ENCODE measurements at regions of chr6 and their contacts with region 1.

Region 1: GRCh38 chr6:34248727-34249551 is at the start of gene SMIM29:
- DNase-seq: peak; percentile 83 to 97
- H3K4me3 ChIP-seq: peak within 1 kb of the TSS; percentile 88
- H3K27ac ChIP-seq: peak within 1 kb of the TSS; percentile 83
- H3K4me1 ChIP-seq: peaks cover 43% of the 10 kb centered on the region
- H3K27me3 ChIP-seq: no peaks in the 10 kb centered on the region
- CTCF ChIP-seq: peak; percentile 87
- total RNA-seq, gene SMIM29: 32.8 and 35.2 TPM in 2 replicates

Region 2: GRCh38 chr6:34161857-34162515 is 87.0 kb before region 1 on chr6:
- CTCF ChIA-PET with region 1: interaction called, 13 read pairs
- POLR2A ChIA-PET with region 1: no interaction called
- intact Hi-C with region 1: loop called (anchors 1 kb)
- DNase-seq: no peak
- H3K4me3 ChIP-seq: no peak overlapping the region
- H3K27ac ChIP-seq: no peak overlapping the region
- H3K4me1 ChIP-seq: no peaks in the 10 kb centered on the region; the same call in 1 of the 2 replicates
- H3K27me3 ChIP-seq: no peaks in the 10 kb centered on the region; the same call in 1 of the 2 replicates
- CTCF ChIP-seq: no peak

Region 3: DNA sequence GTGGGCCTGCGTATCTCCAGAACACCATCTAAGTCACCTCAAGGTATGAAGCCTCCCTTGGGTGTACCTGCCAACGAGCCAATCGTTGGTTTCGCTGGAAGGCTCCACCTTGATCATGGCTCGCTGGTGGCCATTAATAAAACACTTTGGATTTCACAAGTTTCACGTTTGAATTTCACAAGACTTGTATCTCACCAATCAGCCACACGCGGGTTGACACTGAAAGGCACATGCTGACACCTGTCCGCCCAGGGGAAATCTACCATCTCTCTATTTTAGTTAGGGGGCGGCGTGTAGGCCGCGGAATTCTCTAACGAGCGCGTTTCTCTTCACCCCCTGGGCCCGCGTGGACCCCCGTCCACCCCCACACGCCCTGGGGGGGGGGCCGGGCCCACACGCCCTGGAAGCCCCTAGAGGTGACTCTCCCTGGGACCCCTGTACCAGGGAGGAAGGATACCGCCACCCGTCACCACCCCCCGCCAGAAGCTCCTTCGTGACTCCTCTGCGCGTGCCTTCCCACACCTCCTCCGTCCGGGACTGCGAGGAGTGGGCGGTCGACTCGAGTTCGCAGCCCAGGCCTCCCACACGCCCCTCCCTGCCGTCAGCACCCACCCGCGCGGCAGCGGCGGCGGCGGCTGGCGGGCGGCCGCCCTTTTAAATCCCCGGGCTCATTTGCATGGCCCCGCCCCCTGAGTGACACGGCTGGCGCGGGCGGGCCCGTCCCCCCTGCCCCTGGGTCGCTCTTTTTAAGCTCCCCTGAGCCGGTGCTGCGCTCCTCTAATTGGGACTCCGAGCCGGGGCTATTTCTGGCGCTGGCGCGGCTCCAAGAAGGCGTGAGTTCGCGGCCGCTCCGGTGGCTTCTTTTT is 12.6 kb before region 1 on chr6 and contains the start of gene HMGA1:
- CTCF ChIA-PET with region 1: interaction called, 5 read pairs
- POLR2A ChIA-PET with region 1: interaction called, 5 read pairs
- intact Hi-C with region 1: loop called (anchors 1 kb)
- DNase-seq: peak; percentile 86
- H3K4me3 ChIP-seq: peak within 1 kb of the TSS; percentile 94
- H3K27ac ChIP-seq: peak within 1 kb of the TSS; percentile 97
- H3K4me1 ChIP-seq: peaks cover 52% of the 10 kb centered on the region
- H3K27me3 ChIP-seq: no peaks in the 10 kb centered on the region
- CTCF ChIP-seq: peak; percentile 6; the same call in 1 of the 2 replicates
- total RNA-seq, gene HMGA1: 1,825 and 1,951 TPM in 2 replicates

Region 4: DNA sequence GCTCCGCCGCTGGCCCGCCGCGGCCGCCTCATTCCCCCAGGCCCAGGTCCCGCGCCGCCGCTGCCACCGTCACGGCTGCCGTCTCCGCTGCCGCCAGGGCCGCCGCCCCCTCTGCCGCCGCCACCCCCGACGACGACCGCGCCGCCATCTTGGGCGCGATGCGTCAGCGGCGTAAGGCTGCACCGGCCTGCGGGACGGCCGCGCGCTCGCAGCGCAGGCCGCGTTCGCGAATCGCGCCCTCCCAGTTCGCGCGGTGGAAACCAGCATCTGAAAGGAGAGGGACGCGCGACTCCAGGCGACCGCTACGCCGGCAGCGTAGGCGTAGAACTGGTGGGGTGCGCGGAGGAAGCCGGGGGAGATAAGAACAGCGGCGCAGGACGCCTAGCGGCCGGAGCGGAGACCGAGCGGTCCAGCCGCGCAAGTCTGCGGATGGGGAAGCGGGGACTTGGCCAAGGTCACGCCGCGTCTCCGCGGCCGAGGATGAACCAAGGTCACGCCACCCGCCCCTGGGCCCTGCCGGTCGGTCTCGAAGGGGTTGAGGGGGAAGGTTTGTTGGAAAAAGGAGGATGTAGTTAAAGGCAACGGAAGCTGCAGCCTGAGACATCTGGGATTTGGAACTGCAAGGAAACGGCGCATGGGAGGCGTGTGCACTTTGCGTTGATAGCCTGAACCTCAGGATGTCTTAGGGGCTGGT is 143.7 kb after region 1 on chr6 and contains the start of gene NUDT3:
- CTCF ChIA-PET with region 1: interaction called, 6 read pairs
- POLR2A ChIA-PET with region 1: no interaction called
- intact Hi-C with region 1: loop called (anchors 1 kb)
- DNase-seq: peak; percentile 83 to 92
- H3K4me3 ChIP-seq: peak within 1 kb of the TSS; percentile 99
- H3K27ac ChIP-seq: peak within 1 kb of the TSS; percentile 79
- H3K4me1 ChIP-seq: peaks cover 19% of the 10 kb centered on the region
- H3K27me3 ChIP-seq: no peaks in the 10 kb centered on the region
- CTCF ChIP-seq: peak; percentile 70
- total RNA-seq, gene NUDT3: 16.8 and 19.1 TPM in 2 replicates

Region 5: DNA sequence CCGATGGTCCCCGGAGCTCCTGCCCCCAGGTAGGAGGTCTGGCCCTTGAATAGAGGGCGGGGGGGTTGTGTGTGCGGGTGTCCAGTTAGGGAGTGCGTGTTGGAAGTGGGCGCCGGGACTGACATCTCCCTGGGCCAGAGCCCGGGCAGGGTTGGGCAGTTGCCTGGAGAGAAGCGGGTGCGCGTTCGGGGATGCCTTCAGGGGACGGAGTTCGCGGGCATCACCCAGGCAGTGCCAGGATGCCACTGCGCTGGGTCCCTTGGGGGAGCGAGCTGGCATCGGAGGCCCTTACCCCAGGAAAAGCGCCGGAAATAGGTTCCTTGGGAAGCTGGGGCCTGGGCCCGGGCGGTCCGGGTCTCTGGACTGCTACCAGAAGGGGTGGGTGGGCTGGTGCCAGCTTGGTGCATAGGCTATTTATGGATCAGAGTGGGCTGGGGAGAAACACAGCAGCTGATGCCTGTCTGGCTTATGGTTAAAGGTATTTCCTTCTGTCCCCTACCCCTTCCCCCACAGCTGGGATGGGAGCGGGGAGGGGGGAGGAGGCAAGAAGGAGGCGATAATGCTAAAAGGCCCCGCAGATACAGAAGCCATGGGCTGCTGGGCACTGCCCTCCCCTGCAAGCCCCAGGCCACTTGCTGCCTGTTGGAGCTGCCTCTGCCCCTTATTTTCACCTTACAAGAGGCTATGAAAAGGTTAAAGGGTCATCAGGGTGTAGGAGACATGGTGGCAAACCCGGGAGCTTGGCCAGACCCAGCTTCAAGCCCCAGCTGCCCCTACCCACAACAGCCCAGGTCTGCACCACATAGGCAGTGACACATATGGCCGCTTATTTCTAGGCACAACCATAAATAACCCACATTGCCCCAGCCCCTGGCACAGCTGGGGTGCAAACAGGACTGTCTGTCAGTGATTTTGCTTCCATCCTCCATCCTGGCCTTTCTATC is 217.6 kb after region 1 on chr6:
- CTCF ChIA-PET with region 1: interaction called, 12 read pairs
- POLR2A ChIA-PET with region 1: no interaction called
- intact Hi-C with region 1: no loop called
- DNase-seq: no peak
- H3K4me3 ChIP-seq: peak overlapping the region; percentile 61
- H3K27ac ChIP-seq: no peak overlapping the region
- H3K4me1 ChIP-seq: peaks cover 16% of the 10 kb centered on the region
- H3K27me3 ChIP-seq: no peaks in the 10 kb centered on the region
- CTCF ChIP-seq: no peak

Region 6: GRCh38 chr6:34496103-34496685 is 247.3 kb after region 1 on chr6:
- CTCF ChIA-PET with region 1: no interaction called
- POLR2A ChIA-PET with region 1: no interaction called
- intact Hi-C with region 1: no loop called
- DNase-seq: no peak
- H3K4me3 ChIP-seq: no peak overlapping the region
- H3K27ac ChIP-seq: no peak overlapping the region
- H3K4me1 ChIP-seq: no peaks in the 10 kb centered on the region
- H3K27me3 ChIP-seq: no peaks in the 10 kb centered on the region
- CTCF ChIP-seq: no peak

Region 7: GRCh38 chr6:34610819-34611477 is 362.0 kb after region 1 on chr6:
- CTCF ChIA-PET with region 1: interaction called, 3 read pairs
- POLR2A ChIA-PET with region 1: no interaction called
- intact Hi-C with region 1: loop called (anchors 1 kb)
- DNase-seq: peak in 1 of 2 experiments; percentile 72
- H3K4me3 ChIP-seq: no peak overlapping the region
- H3K27ac ChIP-seq: peak overlapping the region; percentile 72; the same call in 1 of the 2 replicates
- H3K4me1 ChIP-seq: peaks cover 5% of the 10 kb centered on the region; the same call in 1 of the 2 replicates
- H3K27me3 ChIP-seq: no peaks in the 10 kb centered on the region
- CTCF ChIP-seq: no peak

Region 8: DNA sequence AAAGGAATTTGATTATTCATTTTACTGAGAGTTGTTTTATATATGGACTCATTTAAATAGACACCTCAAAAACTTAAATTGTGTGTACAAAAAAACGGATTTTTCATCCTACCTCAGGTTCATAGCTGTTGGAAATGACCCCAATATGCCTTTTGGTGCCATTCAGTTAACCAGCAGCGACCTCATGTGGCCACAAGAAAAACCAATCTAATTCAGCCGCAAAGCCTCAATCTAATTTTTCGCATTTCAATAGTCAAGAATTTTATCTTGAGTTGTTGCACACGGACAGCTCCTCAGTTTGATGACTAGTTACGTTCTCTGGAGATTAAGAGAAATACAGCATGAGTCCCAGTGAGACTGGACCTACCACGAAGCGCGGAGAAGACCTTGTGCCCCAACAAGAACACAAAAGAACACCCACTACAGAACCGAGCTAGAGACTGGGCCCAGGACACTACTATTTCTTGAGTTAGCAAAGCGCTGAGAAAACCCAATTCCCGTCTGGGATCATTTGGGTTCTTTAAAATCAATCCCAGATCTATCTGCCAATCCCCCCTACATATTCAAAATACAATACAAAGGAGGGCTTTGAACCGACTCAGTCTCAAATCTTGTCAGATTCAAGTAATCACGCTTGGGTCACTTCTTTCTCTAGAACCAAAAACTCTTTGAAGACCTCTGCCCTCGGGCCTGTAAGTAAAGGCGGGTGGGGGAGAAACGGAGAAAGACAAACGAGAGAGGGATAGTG is 891.1 kb after region 1 on chr6:
- CTCF ChIA-PET with region 1: no interaction called
- POLR2A ChIA-PET with region 1: no interaction called
- intact Hi-C with region 1: loop called (anchors 5 kb)
- DNase-seq: peak; percentile 27 to 53
- H3K4me3 ChIP-seq: no peak overlapping the region
- H3K27ac ChIP-seq: no peak overlapping the region
- H3K4me1 ChIP-seq: peaks cover 17% of the 10 kb centered on the region
- H3K27me3 ChIP-seq: no peaks in the 10 kb centered on the region
- CTCF ChIP-seq: peak; percentile 93